ENCODE measurements at regions of chr17 and their contacts with region 1.

Region 1: GRCh38 chr17:41665566-41666236 is 23.0 kb upstream of the EIF1 start:
- DNase-seq: peak; percentile 62 to 79
- ATAC-seq: peak; percentile 72 to 79
- H3K4me3 ChIP-seq: peak overlapping the region; percentile 61 to 86 (median 67)
- H3K27ac ChIP-seq: peak overlapping the region; percentile 77 to 86 (median 82)
- H3K4me1 ChIP-seq: peaks cover 0 to 21% of the 10 kb centered on the region in 2 donors
- H3K27me3 ChIP-seq: no peaks in the 10 kb centered on the region
- CTCF ChIP-seq: peak; percentile 86 to 96 (median 92)
- POLR2A ChIP-seq: peak; percentile 35 to 43

Region 2: GRCh38 chr17:40803617-40804082 is 862.1 kb before region 1 on chr17:
- in situ Hi-C with region 1: loop called in 2 of 4 experiments (anchors 10 to 25 kb)
- intact Hi-C with region 1: loop called (anchors 2 kb)
- DNase-seq: peak; percentile 32 to 55
- ATAC-seq: peak in 1 of 2 donors; percentile 75
- H3K4me3 ChIP-seq: no peak overlapping the region
- H3K27ac ChIP-seq: no peak overlapping the region
- H3K4me1 ChIP-seq: no peaks in the 10 kb centered on the region
- H3K27me3 ChIP-seq: peaks cover 19 to 37% (median 28%) of the 10 kb centered on the region in 3 donors
- CTCF ChIP-seq: peak; percentile 48 to 79 (median 69)
- POLR2A ChIP-seq: no peak

Region 3: DNA sequence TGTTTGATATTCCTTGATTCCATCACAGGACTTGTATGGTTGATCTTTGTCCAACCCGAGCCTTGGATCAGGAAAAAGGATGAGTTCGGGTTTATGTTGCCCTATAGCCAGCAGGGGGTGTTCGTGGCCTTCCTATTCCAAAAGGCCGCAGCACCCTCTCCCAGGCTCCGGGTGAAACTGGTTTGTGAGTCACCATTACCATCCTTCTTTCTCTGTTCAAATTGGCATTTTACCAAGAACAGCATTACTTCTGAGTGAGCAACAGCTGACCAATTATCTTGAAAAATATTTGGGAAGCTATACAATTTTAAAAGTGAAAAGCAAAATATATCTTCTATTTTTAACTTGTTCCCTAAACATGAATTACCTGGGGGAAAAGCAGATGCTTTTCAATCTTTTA is 756.4 kb before region 1 on chr17:
- in situ Hi-C with region 1: loop called in 3 of 4 experiments (anchors 10 kb)
- intact Hi-C with region 1: loop called (anchors 1 kb)
- DNase-seq: peak; percentile 52 to 67
- ATAC-seq: peak; percentile 87 to 90
- H3K4me3 ChIP-seq: no peak overlapping the region
- H3K27ac ChIP-seq: no peak overlapping the region
- H3K4me1 ChIP-seq: peaks cover 15% of the 10 kb centered on the region in 2 donors
- H3K27me3 ChIP-seq: peaks cover 0 to 9% (median 0%) of the 10 kb centered on the region in 3 donors
- CTCF ChIP-seq: peak; percentile 59 to 72 (median 66)
- POLR2A ChIP-seq: no peak

Region 4: DNA sequence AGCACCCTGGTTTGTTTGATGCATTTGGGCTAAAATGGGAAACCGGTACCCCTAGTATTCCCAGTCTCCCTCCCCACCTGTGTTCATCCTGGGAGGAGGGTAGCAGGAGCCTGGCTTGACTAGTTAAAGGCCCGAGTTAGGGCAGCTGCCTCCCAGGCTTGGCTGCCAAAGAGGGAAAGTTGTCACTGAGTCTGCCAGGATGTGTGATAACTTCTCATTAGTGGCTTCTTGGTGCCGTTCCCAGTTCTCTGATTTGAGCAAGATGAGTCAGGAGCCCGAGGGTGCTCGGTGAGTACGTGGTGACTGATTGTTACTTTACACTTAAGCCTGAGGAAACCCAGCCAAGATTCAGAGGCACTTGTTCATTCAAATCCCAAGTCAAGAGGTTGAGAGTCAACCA is 201.0 kb before region 1 on chr17:
- in situ Hi-C with region 1: no loop called
- intact Hi-C with region 1: no loop called
- DNase-seq: peak; percentile 72 to 75
- ATAC-seq: peak; percentile 95 to 98
- H3K4me3 ChIP-seq: no peak overlapping the region
- H3K27ac ChIP-seq: peak overlapping the region in 1 of 4 donors; percentile 51
- H3K4me1 ChIP-seq: no peaks in the 10 kb centered on the region
- H3K27me3 ChIP-seq: peaks cover 0 to 2% (median 0%) of the 10 kb centered on the region in 3 donors
- CTCF ChIP-seq: no peak
- POLR2A ChIP-seq: no peak

Region 5: DNA sequence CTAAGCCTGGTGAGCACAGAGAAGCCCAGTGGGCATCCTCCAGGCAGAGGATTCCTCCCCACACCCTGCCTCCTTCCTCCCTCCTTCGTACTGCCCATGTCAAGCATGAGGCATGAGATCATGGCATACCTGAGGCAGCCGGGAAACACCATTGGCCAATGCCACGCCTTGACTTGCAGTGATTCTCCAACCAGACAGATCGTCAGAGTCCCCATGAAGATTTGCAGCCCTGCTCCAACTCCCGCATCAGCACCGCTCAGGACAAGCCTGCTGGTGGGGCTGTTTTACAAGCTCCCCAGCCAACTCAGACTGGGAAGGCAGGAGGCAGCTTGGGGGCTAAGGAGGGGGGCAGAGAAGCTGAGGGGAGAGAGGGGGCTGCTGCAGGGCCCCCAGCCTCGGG is 50.2 kb before region 1 on chr17:
- in situ Hi-C with region 1: no loop called
- intact Hi-C with region 1: no loop called
- DNase-seq: no peak
- ATAC-seq: no peak
- H3K4me3 ChIP-seq: no peak overlapping the region
- H3K27ac ChIP-seq: no peak overlapping the region
- H3K4me1 ChIP-seq: no peaks in the 10 kb centered on the region
- H3K27me3 ChIP-seq: peaks cover 0 to 2% (median 0%) of the 10 kb centered on the region in 3 donors
- CTCF ChIP-seq: no peak
- POLR2A ChIP-seq: no peak

Region 6: GRCh38 chr17:41648411-41649195 is 17.1 kb before region 1 on chr17:
- in situ Hi-C with region 1: no loop called
- intact Hi-C with region 1: loop called (anchors 1 kb)
- DNase-seq: peak; percentile 57 to 79
- ATAC-seq: peak; percentile 95 to 96
- H3K4me3 ChIP-seq: peak overlapping the region; percentile 43 to 52 (median 46)
- H3K27ac ChIP-seq: peak overlapping the region in 1 of 4 donors; percentile 30
- H3K4me1 ChIP-seq: peaks cover 7 to 16% of the 10 kb centered on the region in 2 donors
- H3K27me3 ChIP-seq: no peaks in the 10 kb centered on the region
- CTCF ChIP-seq: peak; percentile 82 to 95 (median 91)
- POLR2A ChIP-seq: no peak

Region 7: GRCh38 chr17:41758601-41759000 is 92.9 kb after region 1 on chr17:
- in situ Hi-C with region 1: no loop called
- intact Hi-C with region 1: no loop called
- DNase-seq: no peak
- ATAC-seq: no peak
- H3K4me3 ChIP-seq: no peak overlapping the region
- H3K27ac ChIP-seq: no peak overlapping the region
- H3K4me1 ChIP-seq: no peaks in the 10 kb centered on the region
- H3K27me3 ChIP-seq: no peaks in the 10 kb centered on the region
- CTCF ChIP-seq: no peak
- POLR2A ChIP-seq: no peak

Region 8: DNA sequence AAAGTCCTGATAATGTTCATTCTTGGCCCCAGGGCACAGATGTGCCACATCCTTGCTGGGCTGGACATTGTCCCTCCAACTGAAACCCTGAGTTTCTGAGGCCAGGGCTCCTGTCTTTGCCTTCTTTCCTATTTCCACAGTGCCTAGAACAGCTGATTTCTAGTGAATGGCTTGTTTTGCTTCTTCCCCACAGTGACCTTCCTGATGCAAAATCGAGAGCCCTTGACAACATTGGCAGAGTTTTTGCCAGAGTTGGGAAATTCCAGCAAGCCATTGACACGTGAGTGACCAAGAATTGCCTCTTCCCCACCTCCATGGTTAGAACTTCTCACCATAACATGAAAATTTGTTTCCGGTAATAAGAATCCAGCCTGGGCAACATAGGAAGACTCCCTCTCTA is 279.2 kb after region 1 on chr17:
- in situ Hi-C with region 1: no loop called
- intact Hi-C with region 1: no loop called
- DNase-seq: no peak
- ATAC-seq: no peak
- H3K4me3 ChIP-seq: no peak overlapping the region
- H3K27ac ChIP-seq: no peak overlapping the region
- H3K4me1 ChIP-seq: peaks cover 0 to 7% of the 10 kb centered on the region in 2 donors
- H3K27me3 ChIP-seq: no peaks in the 10 kb centered on the region
- CTCF ChIP-seq: no peak
- POLR2A ChIP-seq: no peak